ENCODE measurements at regions of chr9 and their contacts with region 1.

Region 1: GRCh38 chr9:14258660-14259239 is 55.2 kb downstream of the NFIB start:
- DNase-seq: no peak
- ATAC-seq: no peak
- H3K4me3 ChIP-seq: no peak overlapping the region
- H3K27ac ChIP-seq: peak overlapping the region in 5 of 10 donors; percentile 5 to 78 (median 29)
- H3K4me1 ChIP-seq: peaks cover 19 to 87% (median 62%) of the 10 kb centered on the region in 9 donors
- H3K27me3 ChIP-seq: no peaks in the 10 kb centered on the region
- CTCF ChIP-seq: no peak

Region 2: GRCh38 chr9:14238552-14238951 is 20.2 kb before region 1 on chr9:
- intact Hi-C with region 1: no loop called
- DNase-seq: peak in 1 of 2 donors; percentile 44
- ATAC-seq: peak; percentile 70 to 89 (median 82)
- H3K4me3 ChIP-seq: no peak overlapping the region
- H3K27ac ChIP-seq: peak overlapping the region in 9 of 10 donors; percentile 57 to 87 (median 74)
- H3K4me1 ChIP-seq: peaks cover 0 to 97% (median 79%) of the 10 kb centered on the region in 9 donors
- H3K27me3 ChIP-seq: no peaks in the 10 kb centered on the region
- CTCF ChIP-seq: no peak

Region 3: GRCh38 chr9:14302405-14302804 is 43.7 kb after region 1 on chr9:
- intact Hi-C with region 1: loop called in 5 of 10 experiments (anchors 5 to 10 kb)
- DNase-seq: no peak
- ATAC-seq: no peak
- H3K4me3 ChIP-seq: no peak overlapping the region
- H3K27ac ChIP-seq: peak overlapping the region in 7 of 10 donors; percentile 16 to 100 (median 46)
- H3K4me1 ChIP-seq: peaks cover 23 to 100% (median 94%) of the 10 kb centered on the region in 9 donors
- H3K27me3 ChIP-seq: no peaks in the 10 kb centered on the region
- CTCF ChIP-seq: no peak

Region 4: DNA sequence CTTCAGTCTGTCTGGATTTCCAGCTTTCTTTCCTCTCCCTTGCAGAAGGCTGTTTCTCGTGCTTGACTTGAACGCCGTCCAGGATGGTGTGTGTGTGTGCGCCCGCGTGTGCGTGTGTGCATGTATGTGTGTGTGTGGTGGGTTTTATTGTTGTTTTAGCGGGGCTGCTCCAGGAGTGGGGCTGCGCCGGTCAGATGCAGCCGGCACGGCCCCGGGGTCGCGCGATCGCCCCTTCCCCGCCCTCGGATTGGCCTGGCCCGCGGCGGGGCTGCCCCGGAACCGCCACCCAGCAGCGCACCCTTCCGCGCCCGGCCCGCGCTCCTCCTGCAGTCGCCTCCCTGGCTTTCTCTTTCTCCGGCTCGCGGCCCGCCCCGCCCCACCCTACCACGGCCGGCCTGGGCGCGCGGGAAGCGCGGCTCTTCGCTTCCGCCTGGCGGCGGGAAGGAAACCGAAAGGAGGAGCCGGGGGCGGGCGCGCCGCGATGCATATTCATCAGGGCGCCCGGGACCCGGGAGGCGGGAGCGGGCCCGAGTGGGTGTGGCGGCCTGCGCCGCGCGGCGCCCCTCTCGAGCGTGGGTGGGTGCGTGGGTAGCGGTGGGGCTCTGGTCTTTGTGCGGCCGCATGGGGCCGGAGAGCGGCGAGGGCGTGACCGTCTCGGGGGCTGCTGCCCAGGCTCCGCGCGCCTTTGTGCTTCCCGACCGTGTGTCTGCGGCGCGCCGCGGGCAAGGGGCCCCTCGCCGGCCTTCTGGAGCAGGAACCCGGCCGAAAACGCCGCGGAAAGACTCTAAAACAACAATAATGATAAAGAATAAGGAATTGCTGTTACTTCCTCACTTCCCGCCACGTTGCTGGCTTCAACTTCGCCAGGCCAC is 63.7 kb after region 1 on chr9:
- intact Hi-C with region 1: no loop called
- DNase-seq: peak; percentile 93 to 95
- ATAC-seq: peak; percentile 90 to 98 (median 92)
- H3K4me3 ChIP-seq: peak overlapping the region; percentile 45 to 89 (median 76)
- H3K27ac ChIP-seq: peak overlapping the region; percentile 91 to 100 (median 98)
- H3K4me1 ChIP-seq: peaks cover 4 to 87% (median 60%) of the 10 kb centered on the region in 9 donors
- H3K27me3 ChIP-seq: peaks cover 0 to 26% (median 0%) of the 10 kb centered on the region in 7 donors
- CTCF ChIP-seq: peak; percentile 29 to 79 (median 58)